ENCODE measurements at regions of chr1 and their contacts with region 1.

Region 1: GRCh38 chr1:43582162-43582589 is 51.5 kb downstream of the PTPRF start:
- DNase-seq: no peak
- H3K4me3 ChIP-seq: no peak overlapping the region
- H3K27ac ChIP-seq: no peak overlapping the region
- H3K4me1 ChIP-seq: no peaks in the 10 kb centered on the region
- H3K27me3 ChIP-seq: no peaks in the 10 kb centered on the region
- CTCF ChIP-seq: no peak
- EP300 ChIP-seq: no peak
- POLR2A ChIP-seq: no peak

Region 2: GRCh38 chr1:43444836-43445235 is 137.3 kb before region 1 on chr1:
- intact Hi-C with region 1: loop called in 1 of 4 experiments (anchors 5 kb)
- DNase-seq: peak in 3 of 5 donors; percentile 12 to 33 (median 21)
- H3K4me3 ChIP-seq: no peak overlapping the region
- H3K27ac ChIP-seq: no peak overlapping the region
- H3K4me1 ChIP-seq: peaks cover 8% of the 10 kb centered on the region
- H3K27me3 ChIP-seq: no peaks in the 10 kb centered on the region
- CTCF ChIP-seq: no peak
- EP300 ChIP-seq: no peak
- POLR2A ChIP-seq: no peak

Region 3: DNA sequence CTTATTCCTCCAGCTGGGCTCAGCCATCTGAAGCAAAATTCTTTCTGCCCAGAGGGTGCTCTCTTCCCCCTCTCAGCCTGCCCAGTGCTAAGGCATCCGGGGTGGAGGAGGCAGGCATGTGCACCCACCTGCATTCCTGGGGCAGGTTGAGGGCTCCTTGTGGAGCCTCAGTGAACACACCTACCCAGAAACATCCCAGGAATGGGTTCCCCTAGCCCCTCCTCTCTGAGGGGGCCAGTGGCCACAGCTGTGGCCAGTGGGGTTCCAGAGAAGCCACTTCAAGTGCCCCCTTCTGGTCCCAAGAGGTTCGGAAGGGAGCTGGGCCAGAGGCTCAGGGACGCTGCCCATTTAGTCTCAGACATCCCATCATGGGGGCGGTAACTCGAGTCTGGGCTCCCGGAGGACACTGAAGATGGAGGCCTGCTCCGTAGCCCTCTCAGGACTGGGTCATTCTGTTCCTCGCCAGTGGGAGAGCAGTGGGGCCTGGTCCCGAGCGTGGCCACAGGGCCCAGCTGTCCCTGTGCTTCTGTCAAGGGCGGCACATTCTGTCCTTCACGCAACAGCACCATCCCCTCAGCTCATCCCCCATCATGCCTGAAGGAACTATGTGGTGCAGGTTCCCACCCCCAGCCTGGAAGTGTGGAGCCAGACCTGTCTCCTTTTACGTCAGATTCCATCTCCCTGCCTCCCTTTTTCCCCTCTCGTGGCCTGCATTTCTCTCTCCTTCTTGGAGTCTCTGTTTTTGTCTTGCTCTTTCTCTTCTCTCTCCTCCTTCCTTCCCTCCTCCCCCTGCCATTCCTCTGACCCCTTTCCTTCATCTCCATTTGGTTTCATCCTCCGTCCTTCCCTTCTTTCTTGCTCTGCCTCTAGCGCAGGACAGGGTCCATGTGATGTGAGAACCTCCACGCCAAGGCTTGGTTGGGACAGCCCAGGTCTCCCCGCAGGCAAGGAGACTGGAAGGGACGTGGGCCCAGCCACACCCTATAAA is 18.2 kb after region 1 on chr1:
- intact Hi-C with region 1: no loop called
- DNase-seq: no peak
- H3K4me3 ChIP-seq: no peak overlapping the region
- H3K27ac ChIP-seq: no peak overlapping the region
- H3K4me1 ChIP-seq: no peaks in the 10 kb centered on the region
- H3K27me3 ChIP-seq: no peaks in the 10 kb centered on the region
- CTCF ChIP-seq: no peak
- EP300 ChIP-seq: no peak
- POLR2A ChIP-seq: no peak